ENCODE measurements at regions of chr4 and their contacts with region 1.

Region 1: DNA sequence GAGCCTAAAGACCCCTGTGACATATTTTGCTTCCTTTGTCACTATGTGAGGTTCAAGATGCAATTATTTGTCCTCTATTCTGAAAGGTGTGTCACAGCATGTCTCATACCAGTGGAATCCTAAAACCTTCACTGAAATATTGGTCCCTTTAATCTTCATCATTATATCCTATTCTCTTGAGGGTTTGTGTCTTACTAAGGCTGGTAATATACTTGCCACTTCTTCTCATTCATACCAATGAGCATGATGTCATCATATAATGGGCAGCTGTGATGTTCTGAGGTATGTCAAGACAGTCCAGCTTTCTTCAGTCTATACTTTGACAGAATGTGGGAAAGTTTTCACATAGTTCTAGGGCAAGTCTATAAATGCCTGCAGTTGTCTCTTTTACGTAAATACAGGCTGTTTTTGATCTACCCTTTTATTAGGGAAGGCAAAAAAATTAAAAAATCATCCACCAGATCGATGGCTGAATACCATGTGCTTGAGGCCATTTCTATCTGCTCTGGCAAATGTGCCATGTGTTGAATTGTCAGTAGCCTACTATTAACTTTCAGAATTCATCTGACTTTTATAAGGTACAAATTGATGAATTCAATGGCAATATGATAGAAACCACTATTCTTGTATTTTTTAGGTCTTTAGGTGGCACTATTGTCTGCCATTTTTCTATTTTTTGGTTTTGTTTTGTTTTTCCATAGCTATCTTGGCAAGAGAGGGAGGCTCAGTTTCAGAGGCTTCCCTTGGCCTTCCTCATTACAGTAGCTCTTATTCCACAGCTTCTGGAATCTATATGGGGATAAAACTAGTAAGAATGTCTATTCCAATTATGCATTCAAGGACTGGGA is 209.0 kb downstream of the PPARGC1A start:
- DNase-seq: peak; percentile 8
- ATAC-seq: peak; percentile 51
- H3K4me3 ChIP-seq: no peak overlapping the region
- H3K27ac ChIP-seq: no peak overlapping the region
- H3K4me1 ChIP-seq: no peaks in the 10 kb centered on the region
- H3K27me3 ChIP-seq: no peaks in the 10 kb centered on the region; the same call in 1 of the 2 replicates
- CTCF ChIP-seq: peak; percentile 37
- POLR2A ChIP-seq: no peak
- RAD21 ChIP-seq: peak; percentile 39

Region 2: GRCh38 chr4:23422878-23423277 is 258.0 kb before region 1 on chr4:
- CTCF ChIA-PET with region 1: no interaction called
- POLR2A ChIA-PET with region 1: no interaction called
- dilution Hi-C with region 1: no loop called
- in situ Hi-C with region 1: no loop called
- intact Hi-C with region 1: no loop called
- DNase-seq: no peak
- ATAC-seq: no peak
- H3K4me3 ChIP-seq: no peak overlapping the region
- H3K27ac ChIP-seq: no peak overlapping the region
- H3K4me1 ChIP-seq: no peaks in the 10 kb centered on the region
- H3K27me3 ChIP-seq: no peaks in the 10 kb centered on the region
- CTCF ChIP-seq: no peak
- POLR2A ChIP-seq: no peak
- RAD21 ChIP-seq: no peak

Region 3: DNA sequence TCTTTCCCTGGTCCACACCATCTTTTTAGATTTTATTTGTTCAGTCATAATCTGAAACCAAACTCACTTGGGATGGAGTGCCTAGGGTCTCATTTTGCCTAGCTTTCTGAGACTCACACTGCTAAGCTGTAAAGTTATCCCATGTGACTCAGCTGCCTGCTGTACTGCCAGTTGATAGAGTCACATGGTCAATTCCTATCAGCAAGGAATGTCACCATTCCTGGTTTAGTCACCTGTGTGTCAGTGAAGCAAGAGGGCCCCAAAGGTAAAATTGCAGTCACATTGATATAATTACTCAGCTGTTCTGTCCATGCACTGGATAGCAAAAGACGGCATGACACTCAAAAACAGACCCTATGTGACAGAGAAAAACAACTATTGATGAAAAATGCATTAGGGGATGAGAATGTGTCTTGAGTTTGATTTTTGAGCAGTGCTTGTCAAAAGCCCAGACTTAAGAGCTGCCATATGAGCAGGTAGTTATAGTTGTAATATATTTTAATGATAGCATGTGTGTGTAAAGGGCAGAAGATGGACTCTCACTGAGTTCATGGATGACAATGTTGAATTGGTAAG is 204.3 kb before region 1 on chr4:
- CTCF ChIA-PET with region 1: no interaction called
- POLR2A ChIA-PET with region 1: no interaction called
- dilution Hi-C with region 1: no loop called
- in situ Hi-C with region 1: no loop called
- intact Hi-C with region 1: no loop called
- DNase-seq: no peak
- ATAC-seq: no peak
- H3K4me3 ChIP-seq: no peak overlapping the region
- H3K27ac ChIP-seq: no peak overlapping the region
- H3K4me1 ChIP-seq: no peaks in the 10 kb centered on the region
- H3K27me3 ChIP-seq: no peaks in the 10 kb centered on the region
- CTCF ChIP-seq: no peak
- POLR2A ChIP-seq: no peak
- RAD21 ChIP-seq: no peak

Region 4: GRCh38 chr4:23500894-23501449 is 179.9 kb before region 1 on chr4:
- CTCF ChIA-PET with region 1: no interaction called
- POLR2A ChIA-PET with region 1: no interaction called
- dilution Hi-C with region 1: no loop called
- in situ Hi-C with region 1: no loop called
- intact Hi-C with region 1: no loop called
- DNase-seq: no peak
- ATAC-seq: no peak
- H3K4me3 ChIP-seq: no peak overlapping the region
- H3K27ac ChIP-seq: no peak overlapping the region
- H3K4me1 ChIP-seq: no peaks in the 10 kb centered on the region
- H3K27me3 ChIP-seq: no peaks in the 10 kb centered on the region
- CTCF ChIP-seq: no peak
- POLR2A ChIP-seq: no peak
- RAD21 ChIP-seq: no peak

Region 5: GRCh38 chr4:23819041-23819511 is 138.2 kb after region 1 on chr4:
- CTCF ChIA-PET with region 1: no interaction called
- POLR2A ChIA-PET with region 1: no interaction called
- dilution Hi-C with region 1: no loop called
- in situ Hi-C with region 1: no loop called
- intact Hi-C with region 1: no loop called
- DNase-seq: peak; percentile 45
- ATAC-seq: no peak
- H3K4me3 ChIP-seq: no peak overlapping the region
- H3K27ac ChIP-seq: peak overlapping the region; percentile 2; the same call in 1 of the 2 replicates
- H3K4me1 ChIP-seq: peaks cover 15% of the 10 kb centered on the region
- H3K27me3 ChIP-seq: no peaks in the 10 kb centered on the region
- CTCF ChIP-seq: no peak
- POLR2A ChIP-seq: no peak
- RAD21 ChIP-seq: no peak

Region 6: DNA sequence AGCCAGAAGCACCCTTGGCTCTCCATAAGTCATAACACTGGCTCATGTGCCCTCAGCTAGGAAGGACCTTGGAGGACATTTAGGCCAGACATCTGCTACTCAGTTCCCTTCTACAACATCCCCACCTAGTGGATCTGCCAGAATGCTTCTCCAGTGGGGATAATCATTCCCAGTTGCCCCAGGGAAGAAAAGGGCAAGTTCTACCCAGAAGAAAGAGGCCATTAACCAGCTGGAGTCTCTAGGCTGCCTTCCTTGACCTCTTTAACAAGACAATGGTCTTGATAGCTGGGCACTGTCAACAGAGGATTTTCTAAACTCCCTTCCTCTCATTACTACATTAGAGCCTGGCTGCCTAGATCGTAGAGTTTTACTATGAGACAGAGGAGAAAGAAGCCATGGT is 1307.9 kb after region 1 on chr4:
- CTCF ChIA-PET with region 1: no interaction called
- POLR2A ChIA-PET with region 1: no interaction called
- dilution Hi-C with region 1: no loop called
- in situ Hi-C with region 1: no loop called
- intact Hi-C with region 1: loop called (anchors 5 kb)
- DNase-seq: peak; percentile 51
- ATAC-seq: peak; percentile 85
- H3K4me3 ChIP-seq: no peak overlapping the region
- H3K27ac ChIP-seq: no peak overlapping the region
- H3K4me1 ChIP-seq: no peaks in the 10 kb centered on the region
- H3K27me3 ChIP-seq: peaks cover 6% of the 10 kb centered on the region
- CTCF ChIP-seq: peak; percentile 64
- POLR2A ChIP-seq: no peak
- RAD21 ChIP-seq: peak; percentile 76